ENCODE measurements at regions of chr2 and their contacts with region 1.

Region 1: DNA sequence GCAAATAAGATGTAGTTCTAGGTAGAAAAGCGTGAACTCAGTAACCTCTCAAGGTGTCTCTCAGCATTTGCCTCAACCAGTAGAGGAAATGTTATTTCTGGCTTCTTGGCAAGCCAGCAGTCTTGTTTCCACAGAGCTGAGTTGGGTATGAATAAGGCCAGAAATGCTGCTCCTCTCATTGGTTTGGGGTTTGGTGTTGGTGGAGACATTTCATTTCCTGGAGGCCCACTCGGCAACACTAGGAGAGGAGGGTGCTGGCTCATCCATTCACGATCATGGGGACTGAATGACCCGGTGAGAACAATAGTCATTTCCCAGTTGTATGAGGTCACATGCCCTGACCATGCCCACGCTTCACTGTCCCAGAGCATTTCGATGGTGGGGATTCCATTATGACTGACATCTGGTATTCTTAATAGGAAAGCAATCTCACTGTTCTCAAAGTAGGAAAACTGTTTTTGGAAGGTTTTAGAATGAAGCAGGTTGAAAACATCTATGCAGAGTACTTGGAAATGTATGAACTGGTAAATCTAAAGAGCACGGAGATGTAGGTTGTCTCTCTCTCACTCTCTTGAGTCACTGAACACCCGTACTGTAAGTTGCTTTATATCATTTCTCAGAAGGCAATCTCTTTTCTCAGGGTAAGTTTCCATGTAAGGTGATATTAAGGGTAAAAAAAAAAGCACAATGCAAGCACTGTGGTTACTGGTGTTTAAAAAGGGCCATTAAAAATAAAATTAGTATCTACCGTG is 37.1 kb upstream of the CTLA4 start:
- DNase-seq: peak; percentile 90
- H3K4me3 Mint-ChIP-seq: peak overlapping the region; percentile 58
- H3K27ac Mint-ChIP-seq: peak overlapping the region; percentile 98
- H3K4me1 Mint-ChIP-seq: peaks cover 34% of the 10 kb centered on the region
- H3K27me3 Mint-ChIP-seq: no peaks in the 10 kb centered on the region

Region 2: DNA sequence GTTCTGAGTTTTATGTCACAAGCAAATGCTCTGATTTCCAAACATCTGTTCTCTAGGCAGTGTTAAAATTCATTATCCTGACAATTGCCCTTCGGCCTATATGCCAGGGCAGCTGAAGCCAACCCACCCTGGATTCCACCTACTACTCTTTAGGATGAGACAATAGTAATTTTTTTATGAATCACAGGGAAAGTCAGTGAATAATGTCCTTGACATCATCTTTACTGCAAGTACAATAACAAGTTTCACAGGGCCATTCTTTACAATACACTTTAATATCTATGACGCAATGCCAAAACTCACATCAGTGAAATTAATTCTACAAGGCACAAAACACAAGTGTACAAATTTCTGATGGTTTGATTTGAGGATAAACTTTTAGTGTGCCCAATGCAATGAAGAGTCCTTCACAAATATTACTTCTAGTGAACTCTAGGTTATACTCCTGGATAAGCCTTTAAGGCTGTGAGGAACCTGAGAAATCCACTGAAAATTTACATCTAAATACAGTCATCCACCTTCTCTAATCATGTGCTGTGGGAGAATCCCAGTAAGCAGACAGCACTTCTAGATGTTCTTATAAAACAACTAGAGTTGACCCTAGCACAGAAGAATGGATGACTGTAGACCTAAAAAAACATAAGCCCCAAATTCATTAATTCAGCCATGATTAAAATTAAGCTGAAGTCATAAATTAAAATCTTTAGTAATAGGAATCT is 40.2 kb before region 1 on chr2:
- CTCF ChIA-PET with region 1: no interaction called
- POLR2A ChIA-PET with region 1: no interaction called
- intact Hi-C with region 1: no loop called
- DNase-seq: no peak
- H3K4me3 Mint-ChIP-seq: no peak overlapping the region
- H3K27ac Mint-ChIP-seq: no peak overlapping the region
- H3K4me1 Mint-ChIP-seq: peaks cover 4% of the 10 kb centered on the region
- H3K27me3 Mint-ChIP-seq: no peaks in the 10 kb centered on the region

Region 3: DNA sequence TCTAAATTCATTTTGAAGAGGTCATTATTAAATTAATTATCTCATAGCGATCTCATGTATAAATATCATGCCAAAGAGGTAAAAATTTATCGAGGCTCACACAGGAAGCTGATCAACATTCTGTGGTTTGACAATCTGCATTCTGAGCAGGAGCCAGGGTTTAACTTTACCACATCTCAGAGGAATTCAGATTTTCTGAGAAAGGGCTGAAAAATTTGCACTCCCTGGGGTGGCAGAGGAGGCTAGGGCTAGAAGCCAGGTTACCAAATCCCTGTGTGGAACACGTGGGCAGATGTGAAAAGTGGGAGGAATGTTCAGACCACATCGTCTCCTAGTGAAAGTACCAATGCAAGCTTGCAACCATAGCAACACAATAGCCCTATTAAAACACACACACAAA is 26.4 kb before region 1 on chr2:
- CTCF ChIA-PET with region 1: no interaction called
- POLR2A ChIA-PET with region 1: interaction called, 4 read pairs
- intact Hi-C with region 1: loop called (anchors 1 kb)
- DNase-seq: peak; percentile 63
- H3K4me3 Mint-ChIP-seq: no peak overlapping the region
- H3K27ac Mint-ChIP-seq: peak overlapping the region; percentile 11
- H3K4me1 Mint-ChIP-seq: peaks cover 83% of the 10 kb centered on the region
- H3K27me3 Mint-ChIP-seq: no peaks in the 10 kb centered on the region

Region 4: GRCh38 chr2:203849010-203849409 is 18.5 kb after region 1 on chr2:
- CTCF ChIA-PET with region 1: interaction called, 3 read pairs
- POLR2A ChIA-PET with region 1: interaction called, 11 read pairs
- intact Hi-C with region 1: loop called (anchors 1 kb)
- DNase-seq: no peak
- H3K4me3 Mint-ChIP-seq: no peak overlapping the region
- H3K27ac Mint-ChIP-seq: no peak overlapping the region
- H3K4me1 Mint-ChIP-seq: peaks cover 35% of the 10 kb centered on the region
- H3K27me3 Mint-ChIP-seq: peaks cover 2% of the 10 kb centered on the region

Region 5: DNA sequence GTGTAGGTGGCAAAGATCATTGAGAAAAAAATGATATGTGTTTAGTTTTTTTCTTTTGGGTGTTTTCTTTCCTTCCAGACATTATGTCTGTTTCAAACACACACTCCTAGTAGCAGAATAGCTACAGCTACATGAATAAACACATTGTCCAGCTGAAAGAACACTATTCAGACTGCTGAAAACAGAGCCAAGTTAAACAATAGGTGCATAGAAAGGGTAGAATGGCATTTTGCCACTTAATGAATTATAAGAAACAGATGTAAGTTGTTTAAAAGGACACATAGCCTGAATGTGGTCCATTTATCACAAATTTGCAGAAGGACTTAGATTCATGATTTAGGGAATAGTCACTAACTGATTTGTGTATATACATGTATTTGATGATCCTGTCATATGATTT is 57.2 kb after region 1 on chr2:
- CTCF ChIA-PET with region 1: no interaction called
- POLR2A ChIA-PET with region 1: interaction called, 4 read pairs
- intact Hi-C with region 1: loop called (anchors 1 kb)
- DNase-seq: no peak
- H3K4me3 Mint-ChIP-seq: no peak overlapping the region
- H3K27ac Mint-ChIP-seq: peak overlapping the region; percentile 90
- H3K4me1 Mint-ChIP-seq: peaks cover 84% of the 10 kb centered on the region
- H3K27me3 Mint-ChIP-seq: peaks cover 2% of the 10 kb centered on the region

Region 6: DNA sequence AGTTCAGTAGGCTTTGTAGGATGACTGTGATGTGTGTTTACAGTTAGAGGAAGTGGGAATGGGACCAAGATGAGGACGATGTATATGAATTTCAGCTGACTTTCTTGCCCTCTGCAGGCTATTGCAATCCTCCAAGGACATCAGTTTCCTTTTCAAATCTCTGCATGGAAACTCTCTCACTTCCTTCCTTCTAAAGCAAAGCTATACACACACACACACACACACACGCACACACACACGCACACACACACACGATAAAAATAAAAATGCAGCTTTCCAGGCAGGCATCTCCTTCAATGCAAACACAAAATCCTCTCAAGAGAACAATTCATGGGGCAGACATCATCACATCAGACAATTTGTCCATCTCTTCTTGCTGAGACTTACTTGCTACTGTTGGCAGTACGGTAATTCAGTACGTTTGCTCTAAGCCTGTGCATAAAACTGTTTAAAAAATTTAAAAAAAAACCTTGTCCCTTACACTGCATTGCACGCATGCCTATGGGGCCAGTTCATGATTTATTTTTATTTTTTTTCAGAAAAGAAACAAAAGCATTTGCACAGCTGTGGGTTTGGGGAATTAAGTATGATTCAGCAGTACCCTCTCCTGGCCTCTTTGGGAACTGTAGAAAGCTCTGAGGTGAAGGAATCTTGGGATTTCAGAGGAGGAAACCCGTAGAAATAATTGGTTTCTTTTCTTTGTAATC is 78.9 kb after region 1 on chr2:
- CTCF ChIA-PET with region 1: interaction called, 7 read pairs
- POLR2A ChIA-PET with region 1: no interaction called
- intact Hi-C with region 1: loop called (anchors 2 kb)
- DNase-seq: peak; percentile 42
- H3K4me3 Mint-ChIP-seq: no peak overlapping the region
- H3K27ac Mint-ChIP-seq: peak overlapping the region; percentile 59
- H3K4me1 Mint-ChIP-seq: peaks cover 33% of the 10 kb centered on the region
- H3K27me3 Mint-ChIP-seq: peaks cover 4% of the 10 kb centered on the region

Region 7: DNA sequence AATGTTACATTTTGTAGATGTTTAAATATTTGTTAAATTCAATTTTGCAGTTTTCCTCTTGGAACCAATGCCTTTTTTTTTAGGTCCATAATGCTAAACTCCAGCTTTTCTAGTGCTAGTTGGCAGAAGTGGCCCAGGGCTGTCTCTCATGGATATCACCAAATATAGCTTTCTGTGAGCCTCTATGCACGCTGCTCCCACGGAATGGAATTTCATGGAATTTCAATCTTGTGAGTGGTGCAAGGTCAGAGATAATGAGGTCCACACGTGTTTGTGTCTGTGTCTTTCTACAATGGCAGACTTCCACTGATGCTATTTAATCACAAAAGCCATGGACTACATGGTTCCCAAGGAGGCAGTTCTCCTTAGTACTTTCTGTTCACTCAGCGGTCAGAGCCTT is 523.3 kb after region 1 on chr2:
- CTCF ChIA-PET with region 1: no interaction called
- POLR2A ChIA-PET with region 1: no interaction called
- intact Hi-C with region 1: no loop called
- DNase-seq: no peak
- H3K4me3 Mint-ChIP-seq: no peak overlapping the region
- H3K27ac Mint-ChIP-seq: no peak overlapping the region
- H3K4me1 Mint-ChIP-seq: no peaks in the 10 kb centered on the region
- H3K27me3 Mint-ChIP-seq: peaks cover 8% of the 10 kb centered on the region

Measured in activated CD4-positive, alpha-beta memory T cell treated with anti-CD3 and anti-CD28 coated beads for 36 hours (primary cell).